ENCODE measurements at regions of chr5 and their contacts with region 1.

Region 1: GRCh38 chr5:132205385-132206125 is 22.1 kb downstream of the P4HA2 start:
- DNase-seq: no peak
- H3K4me3 ChIP-seq: no peak overlapping the region
- CTCF ChIP-seq: no peak

Region 2: DNA sequence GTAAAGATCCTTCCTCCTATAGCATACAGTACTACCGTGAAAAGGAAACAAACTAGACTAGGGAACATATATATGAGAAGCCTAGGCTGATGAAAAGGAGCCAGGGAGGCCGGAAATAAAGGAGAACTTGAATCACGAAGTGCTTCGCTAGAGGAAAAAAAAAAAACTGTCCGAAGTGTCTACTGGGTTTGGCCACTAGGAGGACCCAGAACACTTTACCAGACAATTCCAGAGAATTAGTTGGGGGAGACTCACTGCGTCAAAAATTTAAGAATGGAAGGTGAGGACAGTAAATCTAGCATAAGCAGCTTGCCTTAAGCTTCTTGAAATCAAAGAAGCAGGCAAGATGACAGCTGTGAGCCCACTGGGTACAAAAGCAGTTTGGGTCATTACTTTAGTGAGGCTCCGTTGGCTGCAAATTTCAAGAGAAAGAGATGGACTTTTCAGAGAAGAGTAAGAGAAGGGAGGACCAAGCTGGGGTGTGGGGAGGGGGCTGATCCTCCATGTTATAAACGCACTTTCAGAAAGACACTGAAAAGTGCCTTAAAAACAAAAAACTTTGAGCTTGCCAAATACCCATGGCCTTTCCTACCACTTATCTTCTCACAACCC is 25.3 kb before region 1 on chr5:
- CTCF ChIA-PET with region 1: interaction called, 10 read pairs
- POLR2A ChIA-PET with region 1: no interaction called
- DNase-seq: peak; percentile 19
- H3K4me3 ChIP-seq: no peak overlapping the region
- CTCF ChIP-seq: peak; percentile 61

Region 3: DNA sequence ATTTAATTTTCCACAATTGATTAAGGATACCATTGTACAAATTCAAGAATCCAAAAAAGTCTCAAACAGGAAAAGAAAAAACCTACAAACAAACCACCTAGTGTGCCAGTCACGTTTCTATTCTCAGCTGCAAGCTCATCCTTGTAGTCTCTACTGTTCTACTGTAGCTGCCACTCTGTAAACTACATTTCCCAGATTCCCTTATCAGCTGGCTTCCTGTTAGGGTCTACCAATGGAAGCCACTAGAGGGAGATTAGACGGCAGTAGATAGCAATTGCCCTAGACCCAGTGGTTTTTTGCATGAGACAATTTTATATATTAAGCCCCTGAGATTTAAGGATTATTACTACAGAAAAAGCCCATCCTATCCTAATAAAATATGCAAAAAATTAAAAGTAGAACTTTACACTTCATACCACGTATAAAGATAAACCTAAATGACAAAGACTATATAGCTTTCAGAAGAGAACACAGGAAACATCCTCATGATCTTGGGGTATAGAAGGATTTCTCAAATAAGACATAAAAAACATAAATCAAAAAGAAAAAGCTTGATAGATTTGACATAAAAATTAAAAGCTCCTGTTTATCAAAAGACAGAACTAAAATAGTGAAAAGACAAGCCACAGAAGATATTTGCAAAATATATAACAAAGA is 15.3 kb before region 1 on chr5:
- CTCF ChIA-PET with region 1: interaction called, 81 read pairs
- POLR2A ChIA-PET with region 1: no interaction called
- DNase-seq: peak; percentile 17
- H3K4me3 ChIP-seq: no peak overlapping the region
- CTCF ChIP-seq: peak; percentile 81

Region 4: GRCh38 chr5:132227485-132228240 is 22.1 kb after region 1 on chr5 and contains the start of gene P4HA2:
- CTCF ChIA-PET with region 1: interaction called, 5 read pairs
- POLR2A ChIA-PET with region 1: interaction called, 10 read pairs
- DNase-seq: no peak
- H3K4me3 ChIP-seq: peak within 1 kb of the TSS; percentile 70
- CTCF ChIP-seq: no peak

Region 5: GRCh38 chr5:132334812-132335211 is 129.3 kb after region 1 on chr5:
- CTCF ChIA-PET with region 1: no interaction called
- POLR2A ChIA-PET with region 1: no interaction called
- DNase-seq: no peak
- H3K4me3 ChIP-seq: no peak overlapping the region
- CTCF ChIP-seq: no peak